ENCODE measurements at regions of chr5 and their contacts with region 1.

Region 1: GRCh38 chr5:76771705-76772405 is 47.0 kb upstream of the F2RL1 start:
- DNase-seq: no peak
- ATAC-seq: no peak
- H3K4me3 Mint-ChIP-seq: no peak overlapping the region
- H3K27ac Mint-ChIP-seq: peak overlapping the region; percentile 1; the same call in 1 of the 2 replicates
- H3K4me1 Mint-ChIP-seq: no peaks in the 10 kb centered on the region
- H3K27me3 Mint-ChIP-seq: no peaks in the 10 kb centered on the region
- CTCF ChIP-seq: no peak

Region 2: GRCh38 chr5:76607353-76607871 is 164.4 kb before region 1 on chr5:
- CTCF ChIA-PET with region 1: interaction called, 39 read pairs
- POLR2A ChIA-PET with region 1: no interaction called
- DNase-seq: no peak
- ATAC-seq: peak; percentile 63
- H3K4me3 Mint-ChIP-seq: no peak overlapping the region
- H3K27ac Mint-ChIP-seq: peak overlapping the region; percentile 11
- H3K4me1 Mint-ChIP-seq: peaks cover 14% of the 10 kb centered on the region
- H3K27me3 Mint-ChIP-seq: no peaks in the 10 kb centered on the region
- CTCF ChIP-seq: no peak

Region 3: DNA sequence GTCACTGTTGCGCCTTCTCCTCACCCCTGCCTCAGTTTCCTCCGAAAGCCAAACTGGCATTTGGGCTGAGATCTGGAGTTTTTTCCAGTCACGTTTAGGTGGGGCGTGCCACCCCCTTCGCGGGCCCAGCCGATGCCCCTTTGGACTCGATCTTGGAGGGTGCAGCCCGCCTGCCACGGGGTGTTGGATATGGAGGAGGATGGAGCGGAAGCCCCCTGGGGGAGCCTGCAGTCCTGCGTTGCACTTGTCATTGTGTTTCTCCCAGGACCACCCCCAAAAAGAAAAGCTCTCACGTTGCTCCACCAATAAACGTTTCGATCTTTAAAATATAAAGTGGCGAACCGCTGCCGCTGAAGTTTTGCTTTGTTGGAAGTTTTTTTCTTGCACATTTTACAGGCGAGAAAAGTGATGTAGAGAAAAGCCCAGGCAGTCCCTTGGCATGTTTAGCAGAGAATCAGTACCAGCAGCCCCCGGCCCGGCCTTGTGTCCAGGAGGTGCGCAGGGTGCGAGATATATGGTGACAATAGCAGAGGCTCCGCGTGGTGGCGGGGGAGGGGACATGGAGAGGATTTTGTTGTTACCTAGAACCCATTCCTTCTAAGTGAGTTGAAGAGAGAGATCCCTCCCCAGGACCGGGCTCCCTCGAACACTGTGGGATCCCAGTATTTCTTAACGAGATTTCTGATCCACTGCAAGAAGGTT is 55.2 kb before region 1 on chr5:
- CTCF ChIA-PET with region 1: interaction called, 19 read pairs
- POLR2A ChIA-PET with region 1: no interaction called
- DNase-seq: peak; percentile 37
- ATAC-seq: peak; percentile 8
- H3K4me3 Mint-ChIP-seq: peak overlapping the region; percentile 89
- H3K27ac Mint-ChIP-seq: no peak overlapping the region
- H3K4me1 Mint-ChIP-seq: peaks cover 28% of the 10 kb centered on the region
- H3K27me3 Mint-ChIP-seq: peaks cover 34% of the 10 kb centered on the region
- CTCF ChIP-seq: no peak

Region 4: DNA sequence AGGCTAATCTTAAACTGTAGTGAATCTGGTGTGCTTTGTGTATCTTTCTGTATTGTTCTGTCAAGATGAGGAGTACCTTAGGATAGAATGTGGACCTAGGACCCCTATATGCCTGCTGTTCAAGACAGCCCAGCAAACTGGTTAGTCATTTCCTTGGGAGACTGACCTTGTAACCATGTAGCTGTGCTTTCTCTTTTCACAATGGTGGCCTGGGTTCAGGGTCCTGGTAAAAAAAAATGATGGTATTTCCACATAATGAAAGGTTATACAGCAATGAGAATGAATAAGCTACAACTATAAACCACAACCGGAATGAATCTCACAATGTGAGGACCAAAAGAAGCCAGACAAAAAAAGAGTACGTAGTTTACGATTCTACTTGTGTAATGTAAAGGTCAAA is 10.6 kb after region 1 on chr5:
- CTCF ChIA-PET with region 1: interaction called, 11 read pairs
- POLR2A ChIA-PET with region 1: interaction called, 4 read pairs
- DNase-seq: no peak
- ATAC-seq: no peak
- H3K4me3 Mint-ChIP-seq: no peak overlapping the region
- H3K27ac Mint-ChIP-seq: 0 out of 2 replicates have a peak overlapping the region, but pooled peaks have one; percentile 18
- H3K4me1 Mint-ChIP-seq: peaks cover 55% of the 10 kb centered on the region
- H3K27me3 Mint-ChIP-seq: no peaks in the 10 kb centered on the region
- CTCF ChIP-seq: no peak

Region 5: GRCh38 chr5:76805850-76806505 is 34.1 kb after region 1 on chr5:
- CTCF ChIA-PET with region 1: interaction called, 34 read pairs
- POLR2A ChIA-PET with region 1: interaction called, 5 read pairs
- DNase-seq: no peak
- ATAC-seq: no peak
- H3K4me3 Mint-ChIP-seq: peak overlapping the region; percentile 55
- H3K27ac Mint-ChIP-seq: peak overlapping the region; percentile 98
- H3K4me1 Mint-ChIP-seq: peaks cover 64% of the 10 kb centered on the region
- H3K27me3 Mint-ChIP-seq: peaks cover 4% of the 10 kb centered on the region; the same call in 1 of the 2 replicates
- CTCF ChIP-seq: no peak

Region 6: DNA sequence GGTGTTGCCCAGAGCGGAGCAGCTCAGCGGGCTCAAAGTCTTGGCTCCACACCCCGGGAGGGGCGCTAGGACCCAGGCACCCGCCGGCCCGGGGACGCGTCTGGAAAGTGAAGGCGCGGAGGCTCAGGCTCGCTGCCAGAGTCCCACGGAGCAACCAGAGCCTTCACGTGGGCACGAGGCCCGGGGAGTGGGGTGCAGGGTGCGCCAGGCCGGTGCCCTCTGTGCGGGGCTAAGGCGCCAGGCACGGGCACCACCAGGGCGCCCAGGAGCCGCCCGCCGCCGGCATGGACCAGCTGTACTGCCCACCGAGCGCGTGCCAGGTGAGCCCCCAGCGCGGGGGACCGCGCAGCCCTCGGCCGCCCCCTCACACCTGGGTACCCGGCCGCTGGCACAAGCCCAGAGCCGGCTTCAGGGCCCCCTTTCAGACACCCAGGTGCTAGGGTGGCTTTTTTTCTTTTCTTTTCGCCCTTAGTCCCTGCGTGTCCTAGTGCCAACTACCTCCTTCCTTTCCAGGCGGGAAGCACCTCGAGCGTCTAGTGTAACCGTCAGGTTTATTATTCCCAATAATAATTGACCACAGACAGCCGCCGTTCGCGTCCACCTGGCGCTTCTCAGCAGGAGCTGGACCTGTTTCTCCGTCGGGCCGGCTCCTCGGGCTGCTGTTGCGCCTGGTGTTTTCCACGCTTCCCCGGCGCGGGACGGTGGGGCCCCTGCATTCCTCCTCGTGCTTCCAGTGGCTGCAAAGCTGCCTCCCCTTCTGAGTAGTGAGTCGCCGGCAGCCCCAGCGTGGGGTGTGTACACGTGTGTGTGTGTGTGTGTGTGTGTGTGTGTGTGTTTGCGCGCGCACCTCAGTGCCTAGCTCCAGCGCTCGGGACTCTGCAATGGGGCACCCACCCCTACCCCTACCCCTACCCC is 408.6 kb after region 1 on chr5:
- CTCF ChIA-PET with region 1: no interaction called
- POLR2A ChIA-PET with region 1: no interaction called
- DNase-seq: peak; percentile 45
- ATAC-seq: peak; percentile 66
- H3K4me3 Mint-ChIP-seq: peak overlapping the region; percentile 66
- H3K27ac Mint-ChIP-seq: no peak overlapping the region
- H3K4me1 Mint-ChIP-seq: peaks cover 9% of the 10 kb centered on the region
- H3K27me3 Mint-ChIP-seq: peaks cover 45% of the 10 kb centered on the region
- CTCF ChIP-seq: no peak

Measured in WTC11 (cell line).